ENCODE measurements at regions of chr10 and their contacts with region 1.

Region 1: DNA sequence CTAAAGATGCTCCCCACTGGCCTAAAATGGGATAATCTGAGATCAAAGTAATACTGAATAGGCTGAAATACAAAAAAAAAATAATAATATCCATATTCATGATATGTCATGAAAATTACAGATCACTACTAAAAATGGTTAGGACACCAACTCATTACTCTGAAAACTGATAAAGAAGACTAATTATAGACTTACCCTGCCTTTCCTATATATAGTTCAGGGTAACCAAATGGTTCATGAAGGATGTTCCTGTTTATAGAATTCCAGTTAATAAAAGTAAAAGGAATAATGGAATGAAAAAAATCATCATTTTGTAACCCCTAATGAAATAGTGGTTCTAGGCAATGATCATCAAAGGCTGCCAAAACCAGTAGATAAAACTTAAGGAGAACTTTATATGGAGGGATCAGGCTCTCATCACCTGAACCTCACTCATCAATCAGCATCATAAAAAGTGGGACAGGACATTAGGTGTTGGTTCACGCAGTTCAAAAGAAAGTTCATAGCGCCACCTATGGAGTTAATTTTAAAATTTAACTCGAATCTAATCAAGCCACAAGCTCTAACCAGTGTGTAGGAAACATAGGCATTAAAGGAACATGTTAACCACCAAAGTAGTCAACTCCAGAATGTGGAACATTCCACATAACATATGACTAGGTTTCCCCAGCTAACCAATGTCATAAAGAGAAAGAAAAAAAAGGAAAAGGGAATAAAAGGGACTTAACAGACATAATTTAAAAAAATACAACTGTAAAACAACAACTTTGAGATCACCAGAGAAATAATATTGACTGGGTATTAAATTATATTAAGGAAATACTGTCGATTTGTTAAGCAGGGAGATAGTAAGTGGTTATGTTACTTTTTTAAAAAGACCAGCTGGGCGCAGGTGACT is 35.7 kb downstream of the P4HA1 start:
- DNase-seq: peak; percentile 98
- ATAC-seq: peak; percentile 95
- H3K4me3 ChIP-seq: no peak overlapping the region
- H3K27ac ChIP-seq: no peak overlapping the region
- H3K4me1 ChIP-seq: no peaks in the 10 kb centered on the region
- H3K27me3 ChIP-seq: no peaks in the 10 kb centered on the region
- CTCF ChIP-seq: peak; percentile 100

Region 2: GRCh38 chr10:72297968-72298773 is 762.8 kb before region 1 on chr10:
- CTCF ChIA-PET with region 1: no interaction called
- POLR2A ChIA-PET with region 1: no interaction called
- intact Hi-C with region 1: no loop called
- DNase-seq: peak; percentile 91
- ATAC-seq: peak; percentile 93
- H3K4me3 ChIP-seq: peak overlapping the region; percentile 66
- H3K27ac ChIP-seq: peak overlapping the region; percentile 97
- H3K4me1 ChIP-seq: peaks cover 22% of the 10 kb centered on the region
- H3K27me3 ChIP-seq: no peaks in the 10 kb centered on the region
- CTCF ChIP-seq: no peak

Region 3: GRCh38 chr10:72692057-72692910 is 368.7 kb before region 1 on chr10 and contains the start of gene MCU:
- CTCF ChIA-PET with region 1: interaction called, 3 read pairs
- POLR2A ChIA-PET with region 1: no interaction called
- intact Hi-C with region 1: loop called (anchors 5 kb)
- DNase-seq: peak; percentile 89
- ATAC-seq: peak; percentile 88
- H3K4me3 ChIP-seq: peak within 1 kb of the TSS; percentile 94
- H3K27ac ChIP-seq: no peak within 1 kb of the TSS; the same call in 1 of the 2 replicates
- H3K4me1 ChIP-seq: peaks cover 49% of the 10 kb centered on the region
- H3K27me3 ChIP-seq: no peaks in the 10 kb centered on the region
- CTCF ChIP-seq: no peak
- total RNA-seq, gene MCU: 16.4 and 21.5 TPM in 2 replicates

Region 4: GRCh38 chr10:72846225-72846624 is 214.8 kb before region 1 on chr10:
- CTCF ChIA-PET with region 1: no interaction called
- POLR2A ChIA-PET with region 1: no interaction called
- intact Hi-C with region 1: loop called (anchors 2 kb)
- DNase-seq: peak; percentile 100
- ATAC-seq: peak; percentile 99
- H3K4me3 ChIP-seq: no peak overlapping the region
- H3K27ac ChIP-seq: peak overlapping the region; percentile 8; the same call in 1 of the 2 replicates
- H3K4me1 ChIP-seq: peaks cover 25% of the 10 kb centered on the region
- H3K27me3 ChIP-seq: no peaks in the 10 kb centered on the region
- CTCF ChIP-seq: no peak

Region 5: GRCh38 chr10:72875250-72876055 is 185.5 kb before region 1 on chr10:
- CTCF ChIA-PET with region 1: interaction called, 4 read pairs
- POLR2A ChIA-PET with region 1: no interaction called
- intact Hi-C with region 1: loop called (anchors 1 kb)
- DNase-seq: peak; percentile 98
- ATAC-seq: peak; percentile 86
- H3K4me3 ChIP-seq: no peak overlapping the region
- H3K27ac ChIP-seq: no peak overlapping the region
- H3K4me1 ChIP-seq: peaks cover 3% of the 10 kb centered on the region; the same call in 1 of the 2 replicates
- H3K27me3 ChIP-seq: peaks cover 30% of the 10 kb centered on the region
- CTCF ChIP-seq: peak; percentile 100

Region 6: DNA sequence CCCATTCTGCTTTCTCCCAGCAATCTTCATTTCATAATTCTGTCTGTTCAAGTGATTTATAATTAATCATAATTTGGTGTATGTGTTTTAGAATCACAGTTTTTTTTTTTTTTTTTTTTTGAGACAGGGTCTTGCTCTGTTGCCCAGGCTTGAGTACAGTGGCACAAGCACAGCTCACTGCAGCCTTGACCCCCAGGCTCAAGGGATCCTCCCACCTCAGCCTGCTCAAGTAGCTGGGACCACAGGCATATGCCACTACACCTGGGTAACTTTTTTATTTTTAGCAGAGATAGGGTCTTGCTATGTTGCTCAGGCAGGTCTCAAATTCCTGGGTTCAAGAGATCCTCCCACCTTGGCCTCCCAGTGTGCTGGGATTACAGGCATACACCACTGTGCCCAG is 57.2 kb before region 1 on chr10:
- CTCF ChIA-PET with region 1: no interaction called
- POLR2A ChIA-PET with region 1: no interaction called
- intact Hi-C with region 1: loop called (anchors 2 kb)
- DNase-seq: no peak
- ATAC-seq: no peak
- H3K4me3 ChIP-seq: no peak overlapping the region
- H3K27ac ChIP-seq: no peak overlapping the region
- H3K4me1 ChIP-seq: no peaks in the 10 kb centered on the region
- H3K27me3 ChIP-seq: no peaks in the 10 kb centered on the region
- CTCF ChIP-seq: no peak

Region 7: DNA sequence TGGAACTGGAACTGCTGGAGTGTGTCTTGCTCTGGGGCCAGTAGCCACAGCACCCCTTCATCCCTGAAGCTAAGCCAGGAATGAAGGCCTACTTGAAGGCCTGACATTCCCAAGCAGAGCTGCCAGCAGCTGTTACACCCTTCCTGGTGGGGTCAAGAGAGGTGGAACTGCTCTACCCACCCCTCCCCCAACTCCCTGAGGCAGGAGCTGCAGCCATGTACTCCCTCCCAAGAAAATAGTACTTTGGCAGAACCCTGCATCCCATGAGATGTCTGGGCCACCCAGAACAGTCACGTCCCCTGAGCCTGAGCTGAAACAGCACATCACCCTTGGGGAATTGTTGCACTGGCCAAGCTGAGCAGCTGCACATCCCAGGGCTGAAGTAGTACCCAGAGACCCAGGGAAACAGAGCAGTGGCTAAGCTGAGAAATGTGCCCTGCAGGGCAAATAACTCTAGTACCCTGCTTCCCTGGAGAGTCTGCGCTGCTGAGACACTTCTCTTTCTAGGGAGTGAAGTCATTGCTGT is 43.0 kb before region 1 on chr10:
- CTCF ChIA-PET with region 1: interaction called, 8 read pairs
- POLR2A ChIA-PET with region 1: no interaction called
- intact Hi-C with region 1: loop called (anchors 1 kb)
- DNase-seq: no peak
- ATAC-seq: no peak
- H3K4me3 ChIP-seq: no peak overlapping the region
- H3K27ac ChIP-seq: no peak overlapping the region
- H3K4me1 ChIP-seq: peaks cover 14% of the 10 kb centered on the region
- H3K27me3 ChIP-seq: no peaks in the 10 kb centered on the region
- CTCF ChIP-seq: no peak

Region 8: DNA sequence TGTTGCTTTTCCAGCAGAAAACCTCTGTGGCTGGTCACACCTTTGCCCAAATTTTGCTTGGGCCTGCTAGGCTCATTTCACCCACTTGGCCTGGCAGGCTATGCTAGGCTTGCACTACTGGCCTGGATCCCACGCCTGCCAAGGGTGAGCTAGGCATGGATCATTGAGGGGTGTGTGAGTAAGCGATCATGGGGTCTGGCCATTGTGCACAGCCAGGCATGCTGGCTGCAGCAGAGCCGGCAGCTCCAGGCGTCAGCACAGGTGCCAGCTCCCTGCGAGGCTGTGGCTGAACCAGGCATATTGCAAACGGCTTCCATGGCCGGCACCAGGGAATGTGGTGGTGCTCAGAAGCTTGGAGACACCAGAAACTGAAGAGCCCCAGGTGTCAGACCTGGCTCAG is 278.4 kb after region 1 on chr10:
- CTCF ChIA-PET with region 1: no interaction called
- POLR2A ChIA-PET with region 1: no interaction called
- intact Hi-C with region 1: no loop called
- DNase-seq: peak; percentile 77
- ATAC-seq: peak; percentile 59
- H3K4me3 ChIP-seq: no peak overlapping the region
- H3K27ac ChIP-seq: peak overlapping the region; percentile 15
- H3K4me1 ChIP-seq: peaks cover 18% of the 10 kb centered on the region
- H3K27me3 ChIP-seq: no peaks in the 10 kb centered on the region
- CTCF ChIP-seq: no peak